ENCODE measurements at regions of chr10 and their contacts with region 1.

Region 1: DNA sequence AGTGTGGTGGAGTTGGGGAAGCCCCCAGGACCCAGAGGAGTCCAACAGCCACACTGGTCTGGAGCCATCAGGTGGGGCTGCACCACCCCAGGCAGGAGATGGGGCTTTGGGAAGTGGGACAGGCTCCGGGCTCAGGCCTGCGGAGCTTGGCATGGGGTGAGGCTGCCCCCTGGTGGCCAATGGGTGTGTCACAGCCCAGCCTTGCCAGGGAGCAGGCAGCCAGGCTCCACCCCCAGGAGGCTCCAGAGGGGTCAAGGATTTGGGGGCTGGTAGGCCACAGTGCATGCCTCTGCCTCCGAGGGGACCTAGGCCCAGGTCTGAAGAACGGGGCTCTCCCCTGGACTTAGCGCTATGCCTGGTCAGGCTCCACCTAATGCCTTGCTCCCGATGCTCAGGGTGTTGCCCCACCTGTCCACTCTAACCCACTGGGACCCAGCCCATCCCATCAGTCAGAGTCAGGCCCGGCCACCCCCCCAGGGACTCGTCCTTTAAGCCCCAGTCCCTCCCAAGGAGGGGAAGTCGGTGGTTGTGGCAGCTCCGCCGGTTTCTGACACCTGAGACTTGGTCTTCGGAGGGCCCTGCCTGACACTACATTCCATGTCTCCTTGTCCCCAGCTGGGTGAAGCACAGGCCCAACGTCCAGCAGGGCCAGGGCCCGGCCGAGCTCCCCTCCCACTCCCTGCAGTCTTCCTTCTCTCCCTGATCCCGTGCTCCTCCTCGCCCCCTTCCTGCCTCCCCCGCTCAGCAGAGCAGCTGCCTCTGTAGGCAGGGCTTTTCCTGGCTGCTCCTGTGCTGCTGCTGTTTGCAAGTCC is 11.3 kb upstream of the SAMD8 start:
- DNase-seq: peak; percentile 80 to 92 (median 80)
- ATAC-seq: peak; percentile 71 to 86 (median 82)
- H3K4me3 ChIP-seq: peak overlapping the region in 6 of 12 donors; percentile 2 to 37 (median 8)
- H3K27ac ChIP-seq: peak overlapping the region in 9 of 12 donors; percentile 28 to 83 (median 74)
- H3K4me1 ChIP-seq: peaks cover 0 to 29% (median 10%) of the 10 kb centered on the region in 12 donors
- H3K27me3 ChIP-seq: no peaks in the 10 kb centered on the region
- CTCF ChIP-seq: peak; percentile 93 to 100 (median 99)
- POLR2A ChIP-seq: no peak

Region 2: GRCh38 chr10:74249865-74250264 is 850.3 kb before region 1 on chr10:
- intact Hi-C with region 1: loop called in 1 of 10 experiments (anchors 5 kb)
- DNase-seq: no peak
- ATAC-seq: no peak
- H3K4me3 ChIP-seq: no peak overlapping the region
- H3K27ac ChIP-seq: no peak overlapping the region
- H3K4me1 ChIP-seq: no peaks in the 10 kb centered on the region
- H3K27me3 ChIP-seq: no peaks in the 10 kb centered on the region
- CTCF ChIP-seq: no peak
- POLR2A ChIP-seq: no peak

Region 3: GRCh38 chr10:74432841-74433594 is 667.1 kb before region 1 on chr10:
- intact Hi-C with region 1: loop called in 2 of 10 experiments (anchors 10 kb)
- DNase-seq: no peak
- ATAC-seq: no peak
- H3K4me3 ChIP-seq: no peak overlapping the region
- H3K27ac ChIP-seq: no peak overlapping the region
- H3K4me1 ChIP-seq: peaks cover 0 to 8% (median 0%) of the 10 kb centered on the region in 12 donors
- H3K27me3 ChIP-seq: no peaks in the 10 kb centered on the region
- CTCF ChIP-seq: no peak
- POLR2A ChIP-seq: no peak

Region 4: DNA sequence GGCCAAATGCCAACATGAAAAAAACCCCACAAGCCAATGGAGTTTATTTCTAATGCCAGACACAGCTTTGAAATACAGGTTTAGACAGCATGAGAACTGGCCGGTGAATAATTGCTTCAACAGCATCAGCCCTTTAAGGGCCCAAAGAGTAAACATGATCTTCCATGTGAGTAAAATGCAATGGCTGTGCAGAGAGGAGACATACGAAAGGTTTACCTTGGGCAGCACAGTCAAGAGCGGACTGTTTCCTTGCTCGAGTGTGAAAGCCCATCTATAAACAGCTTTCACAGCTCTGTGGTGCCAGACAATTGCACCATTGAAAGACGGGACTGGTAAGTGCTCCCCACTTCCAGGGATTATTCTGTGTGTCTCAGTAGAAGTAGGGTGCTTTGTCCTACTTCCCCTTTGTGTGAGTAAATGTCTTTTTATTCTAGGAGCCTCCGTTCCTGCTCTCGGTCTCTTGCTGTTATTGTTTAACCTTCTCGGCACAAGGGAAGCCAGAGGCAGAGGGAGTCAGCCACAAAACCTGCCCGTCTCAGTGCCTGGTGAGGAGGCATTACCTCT is 351.6 kb before region 1 on chr10:
- intact Hi-C with region 1: loop called in 1 of 10 experiments (anchors 10 kb)
- DNase-seq: no peak
- ATAC-seq: no peak
- H3K4me3 ChIP-seq: no peak overlapping the region
- H3K27ac ChIP-seq: no peak overlapping the region
- H3K4me1 ChIP-seq: no peaks in the 10 kb centered on the region
- H3K27me3 ChIP-seq: no peaks in the 10 kb centered on the region
- CTCF ChIP-seq: no peak
- POLR2A ChIP-seq: no peak

Region 5: DNA sequence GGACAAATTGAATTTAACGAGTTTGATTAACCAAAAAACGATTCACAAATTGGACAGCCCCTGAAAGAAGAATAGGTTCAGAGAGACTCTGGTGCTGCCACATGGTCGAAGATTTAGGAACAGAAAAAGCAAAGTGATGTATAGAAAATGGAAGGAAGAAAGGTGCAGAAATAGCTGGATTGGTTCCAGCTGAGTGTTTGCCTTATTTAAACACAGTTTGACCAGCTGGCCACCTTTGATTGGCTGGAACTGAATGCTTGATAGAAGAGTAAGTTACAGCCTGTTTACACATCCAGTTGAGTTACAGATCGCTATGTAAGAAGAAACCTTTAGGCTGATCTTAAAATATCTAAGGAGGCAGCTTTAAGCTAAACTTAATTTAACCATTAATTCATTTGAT is 314.1 kb before region 1 on chr10:
- intact Hi-C with region 1: no loop called
- DNase-seq: no peak
- ATAC-seq: no peak
- H3K4me3 ChIP-seq: no peak overlapping the region
- H3K27ac ChIP-seq: no peak overlapping the region
- H3K4me1 ChIP-seq: no peaks in the 10 kb centered on the region
- H3K27me3 ChIP-seq: no peaks in the 10 kb centered on the region
- CTCF ChIP-seq: no peak
- POLR2A ChIP-seq: no peak

Region 6: GRCh38 chr10:75029857-75030256 is 70.3 kb before region 1 on chr10:
- intact Hi-C with region 1: loop called in 4 of 10 experiments (anchors 5 to 10 kb)
- DNase-seq: peak in 2 of 5 donors; percentile 72 to 74
- ATAC-seq: peak; percentile 34 to 63 (median 52)
- H3K4me3 ChIP-seq: no peak overlapping the region
- H3K27ac ChIP-seq: no peak overlapping the region
- H3K4me1 ChIP-seq: peaks cover 0 to 16% (median 5%) of the 10 kb centered on the region in 12 donors
- H3K27me3 ChIP-seq: no peaks in the 10 kb centered on the region
- CTCF ChIP-seq: no peak
- POLR2A ChIP-seq: no peak

Region 7: DNA sequence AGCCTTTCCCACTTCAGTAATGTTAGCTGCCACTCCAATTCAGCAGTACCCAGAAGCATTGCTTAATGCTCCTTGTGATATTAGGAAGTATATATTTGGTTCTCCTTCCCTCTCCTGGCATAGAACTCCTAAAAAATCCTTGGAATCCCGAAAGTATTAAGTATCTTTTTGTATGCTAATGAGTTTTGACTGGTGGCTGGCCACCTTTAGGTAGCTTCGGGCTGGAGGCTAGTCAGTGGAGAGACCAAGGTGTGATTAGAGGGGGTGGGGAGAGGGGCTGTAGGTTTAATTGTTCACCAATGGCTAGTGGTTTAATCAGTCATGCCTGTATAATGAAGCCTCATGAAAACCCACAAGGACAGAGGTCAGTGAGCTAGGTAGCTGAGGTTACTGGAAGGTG is 123.3 kb after region 1 on chr10:
- intact Hi-C with region 1: no loop called
- DNase-seq: peak in 1 of 5 donors; percentile 2
- ATAC-seq: no peak
- H3K4me3 ChIP-seq: no peak overlapping the region
- H3K27ac ChIP-seq: peak overlapping the region in 9 of 12 donors; percentile 33 to 86 (median 83)
- H3K4me1 ChIP-seq: peaks cover 27 to 85% (median 60%) of the 10 kb centered on the region in 12 donors
- H3K27me3 ChIP-seq: no peaks in the 10 kb centered on the region
- CTCF ChIP-seq: no peak
- POLR2A ChIP-seq: no peak

Region 8: GRCh38 chr10:75319274-75319673 is 219.1 kb after region 1 on chr10:
- intact Hi-C with region 1: no loop called
- DNase-seq: no peak
- ATAC-seq: no peak
- H3K4me3 ChIP-seq: no peak overlapping the region
- H3K27ac ChIP-seq: no peak overlapping the region
- H3K4me1 ChIP-seq: no peaks in the 10 kb centered on the region
- H3K27me3 ChIP-seq: no peaks in the 10 kb centered on the region
- CTCF ChIP-seq: peak in 2 of 12 donors; percentile 39 to 60
- POLR2A ChIP-seq: no peak

Measured in heart left ventricle (tissue), 16 donors.